ENCODE measurements at regions of chr4 and their contacts with region 1.

Region 1: DNA sequence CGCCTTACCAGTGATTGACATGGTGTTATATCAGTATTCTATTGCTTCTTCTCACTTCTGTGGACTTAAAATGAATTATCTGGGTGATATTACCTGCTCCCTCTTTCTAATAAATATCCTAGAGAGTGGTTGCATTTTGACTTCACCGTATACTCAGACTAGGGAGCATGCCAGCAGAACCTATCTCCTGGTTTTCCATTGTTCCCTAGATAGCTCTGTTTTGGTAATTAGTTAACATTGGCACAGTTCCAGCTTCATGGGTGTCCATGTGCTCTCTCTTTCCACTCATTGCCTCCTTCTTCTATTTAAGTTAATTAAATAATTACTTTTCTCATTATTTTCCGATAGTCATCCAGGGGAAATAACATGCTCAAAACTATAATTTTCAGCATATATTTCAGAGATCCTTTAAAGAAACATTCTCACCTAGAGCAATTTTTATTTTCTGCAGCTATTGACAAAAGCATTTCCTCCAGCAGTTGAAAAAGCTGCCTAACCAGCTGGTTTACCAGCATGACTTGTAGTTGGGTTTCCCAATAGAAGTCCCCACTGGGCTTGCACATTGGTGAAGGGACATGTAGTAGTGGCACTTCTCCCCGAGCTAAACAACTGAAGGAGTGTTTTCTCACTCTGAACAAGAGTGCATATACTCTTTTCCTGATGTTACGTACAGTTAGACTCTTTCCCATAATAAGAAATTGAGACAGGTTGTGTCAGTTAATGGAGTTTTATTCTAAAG is 27.9 kb upstream of the PAPSS1 start:
- DNase-seq: no peak
- H3K4me3 ChIP-seq: no peak overlapping the region
- H3K27ac ChIP-seq: no peak overlapping the region
- H3K4me1 ChIP-seq: no peaks in the 10 kb centered on the region
- H3K27me3 ChIP-seq: peaks cover 6% of the 10 kb centered on the region
- CTCF ChIP-seq: no peak
- EP300 ChIP-seq: no peak
- POLR2A ChIP-seq: no peak

Region 2: DNA sequence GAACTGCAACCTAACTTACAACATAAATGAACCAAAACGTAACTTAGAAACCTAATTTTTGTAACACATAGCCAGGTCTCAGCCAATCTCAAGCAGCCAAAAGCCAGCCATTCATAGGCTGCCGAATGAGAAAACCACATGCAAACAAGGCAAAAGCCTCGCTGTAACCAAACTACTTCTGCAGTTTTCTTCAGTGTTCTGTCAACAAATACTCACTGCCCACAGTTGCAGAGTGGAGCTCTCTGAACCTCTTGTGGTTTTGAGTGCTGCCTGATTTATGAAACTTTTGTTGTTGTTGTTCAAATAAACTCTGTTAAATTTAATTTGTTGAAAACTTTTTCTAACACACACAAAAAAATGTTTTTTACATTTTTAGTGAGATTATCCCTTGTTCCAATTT is 279.1 kb before region 1 on chr4:
- in situ Hi-C with region 1: no loop called
- intact Hi-C with region 1: no loop called
- DNase-seq: no peak
- H3K4me3 ChIP-seq: no peak overlapping the region
- H3K27ac ChIP-seq: no peak overlapping the region
- H3K4me1 ChIP-seq: no peaks in the 10 kb centered on the region
- H3K27me3 ChIP-seq: no peaks in the 10 kb centered on the region
- CTCF ChIP-seq: no peak
- EP300 ChIP-seq: no peak
- POLR2A ChIP-seq: no peak

Region 3: GRCh38 chr4:107592519-107592918 is 155.4 kb before region 1 on chr4:
- in situ Hi-C with region 1: no loop called
- intact Hi-C with region 1: no loop called
- DNase-seq: no peak
- H3K4me3 ChIP-seq: no peak overlapping the region
- H3K27ac ChIP-seq: no peak overlapping the region
- H3K4me1 ChIP-seq: no peaks in the 10 kb centered on the region
- H3K27me3 ChIP-seq: no peaks in the 10 kb centered on the region
- CTCF ChIP-seq: no peak
- EP300 ChIP-seq: no peak
- POLR2A ChIP-seq: no peak

Region 4: DNA sequence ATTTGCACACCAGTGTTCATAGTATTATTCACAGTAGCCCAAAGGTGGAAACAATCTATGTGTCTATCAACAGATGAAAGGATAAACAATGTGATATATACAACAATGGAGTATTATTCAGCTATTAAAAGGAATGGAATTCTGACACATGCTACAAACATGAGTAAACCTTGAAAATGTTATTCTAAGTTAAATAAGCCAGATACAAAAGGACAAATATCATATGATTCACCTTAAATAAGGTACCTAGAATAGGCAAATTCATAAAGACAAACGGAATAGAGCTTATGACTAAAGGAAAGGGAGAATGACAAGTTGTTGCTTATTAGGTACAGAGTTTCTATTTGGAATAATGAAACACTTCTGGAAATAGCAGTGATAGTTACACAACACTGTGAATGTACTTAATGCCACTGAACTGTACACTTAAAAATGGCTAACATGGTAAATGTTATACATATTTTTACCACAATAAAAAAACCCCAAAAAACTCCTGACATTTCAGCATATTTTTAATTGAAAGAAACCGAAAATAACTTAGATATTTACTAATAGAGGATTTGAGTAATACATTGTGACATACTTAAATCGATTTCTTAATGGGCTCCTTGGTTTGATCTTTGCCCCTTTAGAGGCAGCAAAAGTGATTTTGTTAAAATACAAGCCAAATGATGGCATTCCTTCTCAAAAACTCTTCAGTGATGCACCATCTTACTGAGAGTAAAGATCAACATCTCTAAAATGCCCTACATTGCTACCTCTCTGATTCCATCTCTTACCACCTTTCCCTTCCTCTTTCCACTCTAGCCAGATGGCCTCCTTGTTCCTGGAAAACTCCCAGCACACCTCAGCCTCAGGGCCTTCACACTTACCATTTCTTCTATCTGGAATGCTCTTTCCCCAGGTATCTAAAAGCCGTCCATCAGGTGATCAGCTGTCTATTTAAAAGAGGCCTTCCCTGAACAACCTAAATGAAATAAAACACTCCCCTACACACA is 174.9 kb after region 1 on chr4:
- in situ Hi-C with region 1: loop called in 2 of 4 experiments (anchors 5 to 10 kb)
- intact Hi-C with region 1: no loop called
- DNase-seq: no peak
- H3K4me3 ChIP-seq: no peak overlapping the region
- H3K27ac ChIP-seq: no peak overlapping the region
- H3K4me1 ChIP-seq: peaks cover 0 to 6% (median 0%) of the 10 kb centered on the region in 4 donors
- H3K27me3 ChIP-seq: no peaks in the 10 kb centered on the region
- CTCF ChIP-seq: no peak
- EP300 ChIP-seq: no peak
- POLR2A ChIP-seq: no peak

Region 5: DNA sequence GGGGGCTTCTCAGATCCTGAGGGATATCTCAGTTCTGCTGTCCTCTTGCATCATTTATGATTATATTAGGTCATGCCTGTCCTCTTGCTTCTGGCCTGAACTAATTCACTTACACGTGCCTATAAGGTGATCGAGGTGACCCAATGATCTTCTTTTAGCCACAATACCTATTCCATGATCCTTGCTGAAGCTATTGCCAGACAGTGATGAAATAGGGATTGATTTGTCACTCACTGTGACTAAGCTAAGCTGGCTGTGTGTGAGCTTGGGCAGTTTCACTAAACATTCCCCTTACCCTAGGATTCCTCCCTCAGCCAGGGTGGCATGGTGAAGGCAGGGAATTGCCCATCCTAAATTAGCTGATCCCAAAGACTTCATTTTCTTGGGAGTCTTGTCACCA is 260.8 kb after region 1 on chr4:
- in situ Hi-C with region 1: no loop called
- intact Hi-C with region 1: no loop called
- DNase-seq: no peak
- H3K4me3 ChIP-seq: no peak overlapping the region
- H3K27ac ChIP-seq: no peak overlapping the region
- H3K4me1 ChIP-seq: peaks cover 0 to 5% (median 0%) of the 10 kb centered on the region in 4 donors
- H3K27me3 ChIP-seq: no peaks in the 10 kb centered on the region
- CTCF ChIP-seq: no peak
- EP300 ChIP-seq: no peak
- POLR2A ChIP-seq: no peak

Region 6: GRCh38 chr4:108762559-108763225 is 1014.8 kb after region 1 on chr4 and contains the start of gene ETNPPL:
- in situ Hi-C with region 1: no loop called
- intact Hi-C with region 1: no loop called
- DNase-seq: no peak
- H3K4me3 ChIP-seq: peak within 1 kb of the TSS; percentile 21 to 54 (median 30)
- H3K27ac ChIP-seq: no peak within 1 kb of the TSS
- H3K4me1 ChIP-seq: peaks cover 0 to 11% (median 7%) of the 10 kb centered on the region in 4 donors
- H3K27me3 ChIP-seq: peaks cover 58% of the 10 kb centered on the region
- CTCF ChIP-seq: no peak
- EP300 ChIP-seq: no peak
- POLR2A ChIP-seq: no peak
- total RNA-seq, gene ETNPPL: not detected